Activated CD8-positive, alpha-beta T cell treated with anti-CD3 and anti-CD28 coated beads, Interleukin-2, amount 10 ng/mL, durations not matched to agents 7 days and 5 days (primary cell): ENCODE measurements at regions of chr16 and their contacts with region 1.

Region 1: GRCh38 chr16:86563489-86564345 is 2.9 kb upstream of the FOXC2 start:
- DNase-seq: peak; percentile 92
- ATAC-seq: peak; percentile 79
- H3K4me3 Mint-ChIP-seq: peak overlapping the region; percentile 6
- H3K27ac Mint-ChIP-seq: no peak overlapping the region
- H3K4me1 Mint-ChIP-seq: peaks cover 10% of the 10 kb centered on the region
- H3K27me3 Mint-ChIP-seq: peaks cover 38% of the 10 kb centered on the region

Region 2: DNA sequence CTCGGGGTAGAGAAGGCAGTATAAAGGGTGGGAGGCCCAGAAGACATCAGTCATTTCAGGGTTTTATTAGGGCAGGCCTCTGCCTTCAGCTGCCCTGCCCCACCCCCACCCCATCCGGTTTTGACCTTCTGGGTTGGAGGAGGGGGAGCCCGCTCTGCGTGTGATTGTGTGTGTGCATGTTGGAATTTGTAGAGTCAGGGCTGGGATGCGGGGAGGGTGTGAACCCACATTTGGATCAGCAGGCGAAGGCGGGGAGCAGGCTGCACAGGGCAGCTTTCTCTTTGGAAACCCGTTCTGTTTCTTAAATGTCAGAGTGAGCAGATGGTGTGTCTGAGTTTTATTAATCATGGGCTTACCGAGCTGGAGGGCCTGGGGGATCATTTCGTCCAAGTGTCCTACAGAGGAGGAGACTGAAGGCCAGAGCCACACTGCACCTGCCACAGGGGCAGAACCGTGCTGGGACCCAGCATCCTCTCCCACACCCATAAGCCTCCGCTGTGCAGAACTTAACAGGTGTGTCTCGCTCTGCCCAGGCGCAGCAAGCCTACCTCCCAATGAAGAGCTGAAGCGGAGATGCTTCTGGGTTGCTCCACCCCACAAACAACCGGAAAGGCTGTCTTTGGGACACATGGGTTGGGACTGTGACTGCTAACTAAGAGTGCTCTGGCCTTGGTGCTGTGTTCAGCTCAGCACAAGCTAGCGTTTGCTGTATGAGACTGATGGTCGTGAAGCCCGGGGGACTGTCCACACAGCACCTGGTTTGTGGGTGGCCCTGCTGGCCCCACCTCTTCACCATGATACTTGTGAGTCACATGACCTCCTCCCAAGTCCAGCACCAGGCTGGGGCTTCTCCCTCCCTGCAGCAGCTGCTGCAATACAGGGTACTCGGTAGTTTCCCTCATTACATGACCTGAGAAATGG is 1021.5 kb before region 1 on chr16:
- CTCF ChIA-PET with region 1: no interaction called
- POLR2A ChIA-PET with region 1: no interaction called
- DNase-seq: no peak
- ATAC-seq: no peak
- H3K4me3 Mint-ChIP-seq: no peak overlapping the region
- H3K27ac Mint-ChIP-seq: no peak overlapping the region
- H3K4me1 Mint-ChIP-seq: peaks cover 3% of the 10 kb centered on the region
- H3K27me3 Mint-ChIP-seq: peaks cover 3% of the 10 kb centered on the region

Region 3: GRCh38 chr16:86874141-86874540 is 310.4 kb after region 1 on chr16:
- CTCF ChIA-PET with region 1: interaction called, 13 read pairs
- POLR2A ChIA-PET with region 1: no interaction called
- DNase-seq: peak; percentile 39
- ATAC-seq: no peak
- H3K4me3 Mint-ChIP-seq: no peak overlapping the region
- H3K27ac Mint-ChIP-seq: no peak overlapping the region
- H3K4me1 Mint-ChIP-seq: no peaks in the 10 kb centered on the region
- H3K27me3 Mint-ChIP-seq: peaks cover 16% of the 10 kb centered on the region

Region 4: GRCh38 chr16:87062569-87063442 is 499.1 kb after region 1 on chr16:
- CTCF ChIA-PET with region 1: interaction called, 43 read pairs
- POLR2A ChIA-PET with region 1: interaction called, 4 read pairs
- DNase-seq: peak; percentile 73
- ATAC-seq: peak; percentile 71
- H3K4me3 Mint-ChIP-seq: no peak overlapping the region
- H3K27ac Mint-ChIP-seq: no peak overlapping the region
- H3K4me1 Mint-ChIP-seq: peaks cover 2% of the 10 kb centered on the region
- H3K27me3 Mint-ChIP-seq: peaks cover 25% of the 10 kb centered on the region

Region 5: DNA sequence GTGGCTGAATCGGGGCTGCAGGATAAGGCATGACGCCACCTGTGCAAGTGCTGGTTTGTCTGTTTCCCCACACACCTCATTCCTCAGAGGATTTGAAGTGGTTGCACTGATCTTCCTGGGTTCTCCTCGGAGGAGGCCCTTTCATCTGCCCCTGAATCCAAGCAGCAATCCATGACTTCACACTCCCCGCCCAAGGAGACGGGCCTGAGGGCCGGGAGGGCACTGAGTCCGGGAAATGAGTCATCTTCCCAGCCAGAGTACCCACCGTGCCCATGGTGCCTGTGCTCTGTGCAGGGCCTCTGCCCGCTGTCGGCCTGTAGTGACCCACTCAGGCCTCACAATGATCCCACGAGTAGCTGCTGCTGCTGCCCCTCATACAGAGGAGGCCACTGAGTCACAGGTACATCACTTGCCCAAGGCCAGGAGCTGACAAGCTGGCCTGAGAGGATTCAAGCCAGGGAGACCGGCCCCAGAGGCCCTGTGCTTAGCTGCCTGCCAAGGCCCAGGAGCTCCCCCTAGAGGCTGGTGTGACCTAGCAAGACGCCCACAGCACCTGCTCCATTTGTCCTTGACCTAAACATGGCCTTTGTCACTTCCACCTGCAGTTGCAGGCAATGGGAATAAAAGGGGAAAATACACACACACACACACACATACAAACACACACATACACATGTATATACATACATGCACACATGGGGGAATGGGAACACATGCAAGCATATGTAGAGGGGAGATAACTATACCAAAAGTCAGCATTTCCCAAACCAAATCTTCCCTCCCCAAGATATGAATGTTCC is 513.4 kb after region 1 on chr16:
- CTCF ChIA-PET with region 1: interaction called, 13 read pairs
- POLR2A ChIA-PET with region 1: no interaction called
- DNase-seq: peak; percentile 60
- ATAC-seq: no peak
- H3K4me3 Mint-ChIP-seq: no peak overlapping the region
- H3K27ac Mint-ChIP-seq: no peak overlapping the region
- H3K4me1 Mint-ChIP-seq: no peaks in the 10 kb centered on the region
- H3K27me3 Mint-ChIP-seq: no peaks in the 10 kb centered on the region